ENCODE measurements at regions of chr10 and their contacts with region 1.

Region 1: DNA sequence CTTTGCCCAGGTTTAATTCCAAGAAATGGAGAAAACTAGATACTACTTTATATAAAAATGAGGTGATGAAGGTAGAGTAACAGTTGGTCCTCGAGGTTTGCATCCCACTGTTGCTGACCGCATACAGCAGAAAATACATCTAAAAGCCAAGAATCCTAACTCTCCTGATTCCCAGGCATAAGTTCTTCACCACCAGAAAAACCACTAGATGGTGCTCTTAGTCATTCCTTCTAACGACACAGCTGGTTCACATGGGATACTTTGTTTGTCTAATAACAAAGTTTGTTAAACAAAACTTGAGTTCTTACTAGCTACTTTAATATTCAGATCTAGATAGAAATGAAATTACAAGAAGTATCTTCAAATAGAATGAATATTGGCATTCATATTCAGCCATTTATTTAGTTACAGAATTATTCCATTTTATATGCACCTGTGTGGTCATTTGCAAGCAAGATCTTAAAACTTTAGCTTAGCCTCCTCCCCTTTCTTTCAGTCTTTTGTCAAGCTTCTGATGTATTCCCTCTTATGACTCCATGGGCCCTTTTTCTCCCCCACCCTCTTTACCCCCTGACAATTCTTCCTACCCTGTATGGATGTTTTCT is 54.1 kb upstream of the CYP26C1 start:
- DNase-seq: no peak

Region 2: DNA sequence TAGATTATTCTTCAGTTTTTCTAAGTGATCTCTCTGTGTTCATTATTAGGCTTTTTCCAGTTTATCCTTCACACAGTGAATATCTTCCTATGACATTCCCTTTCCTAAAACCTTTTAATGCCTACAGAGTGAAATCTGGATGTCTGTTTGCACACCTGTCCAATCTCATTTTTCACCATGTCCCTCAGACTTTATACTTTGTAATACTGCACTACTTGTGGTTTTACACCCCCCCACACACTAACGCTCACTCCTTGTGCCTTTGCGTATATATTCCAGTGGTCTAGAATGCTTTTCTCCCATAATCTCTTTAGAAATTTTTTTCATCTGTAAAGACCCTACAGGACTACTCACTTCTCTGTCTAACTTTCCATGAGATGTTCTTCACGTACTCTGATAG is 60.0 kb before region 1 on chr10:
- intact Hi-C with region 1: no loop called
- DNase-seq: no peak

Region 3: DNA sequence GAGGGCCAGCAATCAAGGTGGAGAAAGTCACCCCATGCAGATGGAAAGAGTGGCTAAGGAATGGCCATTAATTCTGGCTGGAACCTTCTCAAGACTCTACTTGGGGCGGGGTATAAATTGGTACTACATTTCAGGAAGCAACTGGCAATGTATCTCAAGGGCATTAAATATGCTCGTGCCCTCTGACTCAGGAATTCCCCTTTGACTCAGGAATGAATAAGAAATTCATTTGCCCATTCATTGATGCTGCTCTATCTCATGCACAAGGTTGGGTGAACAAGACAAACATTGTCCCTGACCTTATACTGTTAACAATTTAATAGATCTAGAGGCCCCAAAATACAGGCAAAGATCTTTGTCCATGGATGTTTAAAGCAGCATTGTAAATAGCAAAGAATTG is 287.5 kb after region 1 on chr10:
- intact Hi-C with region 1: loop called (anchors 5 kb)
- DNase-seq: no peak

Region 4: GRCh38 chr10:93346694-93347093 is 340.2 kb after region 1 on chr10:
- intact Hi-C with region 1: loop called (anchors 10 kb)
- DNase-seq: no peak

Measured in cardiac septum (tissue), 1 donor.